AG04449 (cell line): ENCODE measurements at regions of chr4 and their contacts with region 1.

Region 1: GRCh38 chr4:87973283-87974169 is 2.0 kb upstream of the SPP1 start:
- DNase-seq: peak; percentile 82
- H3K4me3 ChIP-seq: peak overlapping the region; percentile 43
- CTCF ChIP-seq: peak; percentile 61

Region 2: GRCh38 chr4:87953826-87954225 is 19.7 kb before region 1 on chr4:
- CTCF ChIA-PET with region 1: interaction called, 17 read pairs
- POLR2A ChIA-PET with region 1: no interaction called
- DNase-seq: no peak
- H3K4me3 ChIP-seq: no peak overlapping the region
- CTCF ChIP-seq: no peak

Region 3: GRCh38 chr4:87961993-87962392 is 11.5 kb before region 1 on chr4:
- CTCF ChIA-PET with region 1: interaction called, 34 read pairs
- POLR2A ChIA-PET with region 1: no interaction called
- DNase-seq: no peak
- H3K4me3 ChIP-seq: no peak overlapping the region
- CTCF ChIP-seq: no peak

Region 4: DNA sequence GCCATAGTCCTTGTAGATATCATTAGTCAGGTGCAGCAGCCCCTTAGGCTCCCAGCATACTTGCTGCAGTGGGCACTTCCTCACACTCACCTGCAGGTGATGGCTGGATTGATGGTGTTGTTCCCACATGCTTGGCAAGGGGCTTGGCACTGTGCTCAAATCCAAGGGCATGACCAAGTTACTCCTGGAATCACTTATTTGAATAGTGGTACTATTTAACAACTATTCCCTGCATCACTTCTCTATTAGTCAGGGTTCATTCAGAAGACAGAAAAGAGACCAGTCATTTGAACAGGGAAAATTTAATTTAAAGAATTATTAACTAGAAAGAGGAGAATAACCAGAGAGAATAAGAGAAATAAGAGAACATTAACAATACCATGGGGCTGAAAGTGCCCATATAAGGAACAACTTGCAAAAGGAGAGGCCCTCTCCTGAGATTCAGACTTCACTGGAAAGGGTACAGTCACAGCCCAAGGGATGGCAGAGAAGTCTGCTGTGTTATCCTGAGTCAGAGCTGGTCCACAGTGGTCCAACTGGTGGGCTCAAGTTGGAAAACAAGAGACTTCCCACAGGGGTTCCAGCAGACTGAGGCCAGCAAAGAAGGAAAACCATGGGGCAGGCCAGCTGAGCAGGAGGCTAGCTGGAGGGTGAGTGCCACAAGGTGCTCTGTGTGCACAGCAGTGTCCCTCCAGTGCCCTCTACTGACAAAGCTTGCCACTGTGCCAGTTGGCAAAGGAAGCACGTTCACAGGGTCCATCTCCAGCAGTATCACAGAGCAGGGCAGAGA is 11.8 kb after region 1 on chr4:
- CTCF ChIA-PET with region 1: interaction called, 16 read pairs
- POLR2A ChIA-PET with region 1: no interaction called
- DNase-seq: no peak
- H3K4me3 ChIP-seq: no peak overlapping the region
- CTCF ChIP-seq: peak; percentile 85

Region 5: DNA sequence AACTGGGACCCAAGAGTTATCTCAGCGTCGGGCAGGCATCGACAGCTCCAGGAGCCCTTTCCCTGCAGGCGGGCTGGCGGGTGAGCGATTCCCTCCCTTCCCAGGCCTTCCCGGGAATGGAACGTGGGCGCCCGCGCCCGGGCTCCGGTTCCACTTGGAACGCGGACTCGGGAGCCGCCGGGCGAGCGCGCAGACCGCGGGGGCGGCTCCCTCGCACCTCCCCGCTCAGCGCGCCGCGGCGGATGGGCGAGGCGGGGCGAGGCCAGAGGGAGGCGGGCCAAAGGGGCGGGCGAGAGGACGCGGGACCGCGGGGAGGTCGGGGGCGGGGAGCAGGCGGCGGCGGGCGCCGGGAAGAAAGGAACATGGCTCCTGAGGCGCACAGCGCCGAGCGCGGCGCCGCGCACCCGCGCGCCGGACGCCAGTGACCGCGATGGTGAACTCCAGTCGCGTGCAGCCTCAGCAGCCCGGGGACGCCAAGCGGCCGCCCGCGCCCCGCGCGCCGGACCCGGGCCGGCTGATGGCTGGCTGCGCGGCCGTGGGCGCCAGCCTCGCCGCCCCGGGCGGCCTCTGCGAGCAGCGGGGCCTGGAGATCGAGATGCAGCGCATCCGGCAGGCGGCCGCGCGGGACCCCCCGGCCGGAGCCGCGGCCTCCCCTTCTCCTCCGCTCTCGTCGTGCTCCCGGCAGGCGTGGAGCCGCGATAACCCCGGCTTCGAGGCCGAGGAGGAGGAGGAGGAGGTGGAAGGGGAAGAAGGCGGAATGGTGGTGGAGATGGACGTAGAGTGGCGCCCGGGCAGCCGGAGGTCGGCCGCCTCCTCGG is 34.0 kb after region 1 on chr4 and contains the start of gene PKD2:
- CTCF ChIA-PET with region 1: interaction called, 17 read pairs
- POLR2A ChIA-PET with region 1: no interaction called
- DNase-seq: no peak
- H3K4me3 ChIP-seq: peak within 1 kb of the TSS; percentile 78
- CTCF ChIP-seq: no peak

Region 6: DNA sequence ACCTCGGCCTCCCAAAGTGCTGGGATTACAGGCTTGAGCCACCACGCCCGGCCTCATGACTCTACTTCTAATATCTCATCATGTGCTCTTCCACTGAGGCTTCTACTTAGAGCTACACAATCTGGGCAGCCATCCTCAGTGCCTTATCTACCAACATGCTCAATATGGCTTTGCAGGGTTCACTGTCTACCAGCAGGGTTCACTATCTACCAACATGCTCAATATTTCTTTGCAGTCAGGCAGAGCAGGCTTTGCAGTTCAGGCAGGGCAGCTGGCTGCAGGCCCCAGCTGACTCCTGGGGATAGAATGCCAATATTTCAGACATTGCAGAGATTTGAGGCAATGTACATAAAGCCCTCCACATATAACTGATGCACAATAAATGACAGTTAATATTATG is 81.4 kb after region 1 on chr4:
- CTCF ChIA-PET with region 1: no interaction called
- POLR2A ChIA-PET with region 1: no interaction called
- DNase-seq: no peak
- H3K4me3 ChIP-seq: no peak overlapping the region
- CTCF ChIP-seq: peak; percentile 59

Region 7: DNA sequence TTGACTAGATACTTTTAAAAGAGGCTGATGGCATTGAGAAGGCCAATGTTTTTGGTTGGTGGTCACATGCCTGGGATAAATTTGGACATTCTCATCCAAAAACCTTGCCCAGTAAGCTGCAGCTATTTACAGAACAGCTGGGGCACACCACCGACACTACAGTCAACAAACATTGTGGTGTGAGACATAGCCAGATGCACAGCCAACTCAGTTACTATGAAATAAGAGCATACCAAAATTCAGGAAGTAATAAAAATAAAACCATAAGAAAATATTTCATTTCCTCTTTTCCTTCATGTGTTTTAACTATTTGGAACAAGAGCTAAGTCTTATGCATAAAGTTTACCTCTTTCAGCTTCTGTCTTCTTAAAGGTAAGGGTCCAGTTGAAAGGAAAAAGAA is 302.0 kb after region 1 on chr4:
- CTCF ChIA-PET with region 1: no interaction called
- POLR2A ChIA-PET with region 1: no interaction called
- DNase-seq: no peak
- H3K4me3 ChIP-seq: no peak overlapping the region
- CTCF ChIP-seq: no peak